Activated CD8-positive, alpha-beta T cell treated with anti-CD3 and anti-CD28 coated beads for 36 hours (primary cell): ENCODE measurements at regions of chr18 and their contacts with region 1.

Region 1: GRCh38 chr18:55415258-55415871 is 172.6 kb downstream of the TCF4 start:
- DNase-seq: peak; percentile 90
- ATAC-seq: peak; percentile 77
- H3K4me3 Mint-ChIP-seq: no peak overlapping the region
- H3K27ac Mint-ChIP-seq: no peak overlapping the region
- H3K4me1 Mint-ChIP-seq: peaks cover 1% of the 10 kb centered on the region
- H3K27me3 Mint-ChIP-seq: no peaks in the 10 kb centered on the region
- CTCF ChIP-seq: peak; percentile 88

Region 2: GRCh38 chr18:55018602-55019001 is 396.8 kb before region 1 on chr18:
- CTCF ChIA-PET with region 1: no interaction called
- POLR2A ChIA-PET with region 1: no interaction called
- intact Hi-C with region 1: no loop called
- DNase-seq: no peak
- ATAC-seq: no peak
- H3K4me3 Mint-ChIP-seq: no peak overlapping the region
- H3K27ac Mint-ChIP-seq: no peak overlapping the region
- H3K4me1 Mint-ChIP-seq: no peaks in the 10 kb centered on the region
- H3K27me3 Mint-ChIP-seq: peaks cover 4% of the 10 kb centered on the region
- CTCF ChIP-seq: no peak

Region 3: GRCh38 chr18:55425698-55426097 is 10.3 kb after region 1 on chr18:
- CTCF ChIA-PET with region 1: interaction called, 11 read pairs
- POLR2A ChIA-PET with region 1: no interaction called
- intact Hi-C with region 1: no loop called
- DNase-seq: no peak
- ATAC-seq: no peak
- H3K4me3 Mint-ChIP-seq: no peak overlapping the region
- H3K27ac Mint-ChIP-seq: no peak overlapping the region
- H3K4me1 Mint-ChIP-seq: peaks cover 2% of the 10 kb centered on the region
- H3K27me3 Mint-ChIP-seq: peaks cover 8% of the 10 kb centered on the region
- CTCF ChIP-seq: no peak

Region 4: DNA sequence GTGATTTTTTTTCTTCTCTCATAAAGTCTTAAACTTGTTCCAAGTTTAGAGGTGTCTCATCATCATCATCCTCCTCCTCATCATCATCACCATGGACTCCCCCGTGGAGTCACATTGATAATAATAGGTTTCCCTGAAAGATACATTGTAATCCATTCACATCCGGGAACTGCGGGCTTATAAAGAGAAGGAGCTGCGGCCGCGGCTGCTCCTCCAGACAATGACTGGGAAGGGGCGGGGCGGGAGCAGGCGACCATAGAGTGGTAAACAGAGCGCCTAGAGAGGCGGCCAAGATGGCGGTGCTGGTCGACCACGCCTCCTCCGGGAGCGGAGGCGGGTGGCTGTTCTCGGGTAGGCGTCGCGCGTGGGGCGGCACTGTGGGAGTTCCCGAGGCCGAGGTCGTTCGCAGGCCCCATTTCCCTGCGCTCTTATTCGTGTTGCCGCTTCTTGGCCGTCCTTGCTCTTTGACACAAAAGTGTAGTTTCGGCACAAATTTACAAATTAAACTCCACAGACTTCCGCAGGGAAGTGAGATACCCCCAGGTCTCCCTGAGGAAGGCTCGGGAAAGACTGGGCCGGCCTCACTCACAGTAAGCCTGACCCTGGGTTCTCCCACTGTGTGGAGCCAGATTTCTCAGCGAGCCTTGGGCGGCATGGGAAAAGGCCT is 174.4 kb after region 1 on chr18:
- CTCF ChIA-PET with region 1: no interaction called
- POLR2A ChIA-PET with region 1: no interaction called
- intact Hi-C with region 1: loop called (anchors 5 kb)
- DNase-seq: peak; percentile 85
- ATAC-seq: peak; percentile 84
- H3K4me3 Mint-ChIP-seq: peak overlapping the region; percentile 80
- H3K27ac Mint-ChIP-seq: peak overlapping the region; percentile 68
- H3K4me1 Mint-ChIP-seq: peaks cover 22% of the 10 kb centered on the region
- H3K27me3 Mint-ChIP-seq: peaks cover 33% of the 10 kb centered on the region
- CTCF ChIP-seq: no peak

Region 5: DNA sequence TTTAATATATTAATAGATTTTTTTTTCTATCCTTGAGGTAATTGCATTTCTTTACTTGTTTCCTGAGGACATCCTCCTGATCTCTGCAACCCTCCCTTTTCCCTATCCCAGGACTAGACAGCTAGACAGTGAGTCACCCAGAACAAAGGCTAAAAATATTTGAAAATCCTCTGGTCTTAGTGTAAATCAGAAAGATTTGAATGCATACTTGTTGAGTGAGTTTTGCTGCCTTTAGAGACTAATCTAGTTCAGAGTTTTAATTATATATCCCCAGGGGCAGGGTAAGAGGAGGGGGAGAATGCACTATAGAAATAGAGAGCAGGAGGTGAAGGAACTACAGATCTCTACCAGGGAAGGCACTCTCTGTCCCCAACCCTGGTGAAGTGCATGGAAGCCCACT is 374.9 kb after region 1 on chr18:
- CTCF ChIA-PET with region 1: no interaction called
- POLR2A ChIA-PET with region 1: no interaction called
- intact Hi-C with region 1: no loop called
- DNase-seq: no peak
- ATAC-seq: no peak
- H3K4me3 Mint-ChIP-seq: no peak overlapping the region
- H3K27ac Mint-ChIP-seq: no peak overlapping the region
- H3K4me1 Mint-ChIP-seq: peaks cover 2% of the 10 kb centered on the region
- H3K27me3 Mint-ChIP-seq: no peaks in the 10 kb centered on the region
- CTCF ChIP-seq: no peak

Region 6: DNA sequence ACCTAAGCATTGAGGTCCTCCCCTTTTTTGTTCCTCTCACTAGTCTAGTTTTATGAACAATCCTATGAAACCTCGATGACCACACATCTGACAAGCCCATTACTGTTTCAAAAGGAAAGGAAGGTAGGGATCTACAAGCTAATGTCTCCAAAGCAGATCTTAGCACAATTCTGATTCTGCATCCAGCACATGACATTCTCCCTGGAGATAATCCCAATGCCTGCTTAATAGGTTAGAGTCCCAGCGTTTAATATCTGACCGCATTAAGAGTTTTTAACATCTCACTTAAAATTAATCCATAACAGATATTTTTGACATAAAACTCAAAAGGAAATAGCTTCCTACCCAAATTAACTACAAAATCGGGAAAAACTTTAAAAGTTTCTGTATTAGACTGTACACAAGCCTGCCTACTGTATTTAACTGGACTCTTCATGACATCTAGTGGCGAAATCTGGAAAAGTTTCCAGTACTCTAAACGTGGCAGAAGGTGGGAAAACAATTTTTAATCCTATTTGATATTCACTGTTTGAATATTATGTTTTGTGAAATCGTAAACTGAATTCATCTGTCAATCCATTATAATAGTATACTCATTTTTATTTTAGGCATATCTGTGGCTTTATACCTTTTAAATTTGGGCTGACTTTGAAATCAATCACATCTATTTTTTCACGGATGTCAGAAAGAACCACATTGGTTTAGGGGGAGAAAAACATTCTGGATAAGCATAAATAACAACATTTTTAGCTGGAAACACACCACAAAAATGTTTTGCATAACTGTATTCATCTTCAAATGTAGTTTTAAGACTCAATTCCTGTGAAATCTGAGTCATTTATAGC is 1160.7 kb after region 1 on chr18:
- CTCF ChIA-PET with region 1: interaction called, 4 read pairs
- POLR2A ChIA-PET with region 1: no interaction called
- intact Hi-C with region 1: loop called (anchors 10 kb)
- DNase-seq: no peak
- ATAC-seq: no peak
- H3K4me3 Mint-ChIP-seq: no peak overlapping the region
- H3K27ac Mint-ChIP-seq: no peak overlapping the region
- H3K4me1 Mint-ChIP-seq: no peaks in the 10 kb centered on the region
- H3K27me3 Mint-ChIP-seq: peaks cover 5% of the 10 kb centered on the region
- CTCF ChIP-seq: peak; percentile 67